ENCODE measurements at regions of chr17 and their contacts with region 1.

Region 1: GRCh38 chr17:13594762-13595598 is 6.7 kb downstream of the HS3ST3A1 start:
- DNase-seq: peak; percentile 33 to 84
- ATAC-seq: peak in 6 of 8 donors; percentile 53 to 80 (median 71)
- H3K4me3 ChIP-seq: no peak overlapping the region
- H3K27ac ChIP-seq: no peak overlapping the region
- H3K4me1 ChIP-seq: peaks cover 0 to 12% (median 0%) of the 10 kb centered on the region in 9 donors
- H3K27me3 ChIP-seq: peaks cover 0 to 30% (median 14%) of the 10 kb centered on the region in 7 donors
- CTCF ChIP-seq: peak; percentile 73 to 91 (median 89)

Region 2: DNA sequence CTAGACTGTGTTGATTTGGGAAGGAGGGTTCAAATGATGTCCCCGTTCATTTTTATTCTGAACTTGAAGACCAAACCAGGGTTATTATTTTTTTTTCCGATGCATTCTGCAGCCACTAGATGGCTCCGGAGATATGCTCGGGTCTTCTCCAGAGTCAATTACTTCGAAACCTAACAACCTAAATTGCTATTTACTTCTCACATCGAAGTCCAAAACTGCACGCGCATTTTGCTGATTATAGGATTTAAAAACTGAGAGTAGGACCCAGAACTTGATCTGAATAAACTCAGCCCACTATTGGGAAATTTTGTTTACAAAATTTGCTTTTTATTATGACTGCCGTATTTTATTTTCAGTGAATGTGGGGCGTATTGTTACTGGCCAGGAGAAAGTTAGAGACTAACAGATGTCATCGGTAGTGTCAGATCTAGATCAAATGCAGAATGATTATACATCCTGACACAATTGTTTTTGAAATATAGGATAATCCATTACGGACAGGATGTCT is 257.1 kb before region 1 on chr17:
- intact Hi-C with region 1: loop called in 8 of 10 experiments (anchors 2 to 10 kb)
- DNase-seq: peak in 1 of 2 donors; percentile 29
- ATAC-seq: peak in 4 of 8 donors; percentile 47 to 67 (median 58)
- H3K4me3 ChIP-seq: peak overlapping the region in 8 of 10 donors; percentile 6 to 49 (median 40)
- H3K27ac ChIP-seq: no peak overlapping the region
- H3K4me1 ChIP-seq: peaks cover 0 to 6% (median 0%) of the 10 kb centered on the region in 9 donors
- H3K27me3 ChIP-seq: peaks cover 0 to 28% (median 0%) of the 10 kb centered on the region in 7 donors
- CTCF ChIP-seq: peak; percentile 47 to 82 (median 70)

Region 3: GRCh38 chr17:13609936-13610335 is 15.0 kb after region 1 on chr17:
- intact Hi-C with region 1: loop called in 1 of 10 experiments (anchors 1 kb)
- DNase-seq: no peak
- ATAC-seq: no peak
- H3K4me3 ChIP-seq: no peak overlapping the region
- H3K27ac ChIP-seq: no peak overlapping the region
- H3K4me1 ChIP-seq: no peaks in the 10 kb centered on the region
- H3K27me3 ChIP-seq: peaks cover 0 to 16% (median 0%) of the 10 kb centered on the region in 7 donors
- CTCF ChIP-seq: no peak

Region 4: GRCh38 chr17:14069251-14070021 is 474.5 kb after region 1 on chr17 and contains the start of gene COX10:
- intact Hi-C with region 1: loop called in 2 of 10 experiments (anchors 10 kb)
- DNase-seq: peak; percentile 88 to 89
- ATAC-seq: peak; percentile 99 to 100 (median 99)
- H3K4me3 ChIP-seq: peak within 1 kb of the TSS; percentile 71 to 98 (median 93)
- H3K27ac ChIP-seq: peak within 1 kb of the TSS; percentile 80 to 95 (median 90)
- H3K4me1 ChIP-seq: peaks cover 0 to 37% (median 25%) of the 10 kb centered on the region in 9 donors
- H3K27me3 ChIP-seq: no peaks in the 10 kb centered on the region
- CTCF ChIP-seq: peak in 1 of 9 donors; percentile 13
- total RNA-seq, gene COX10: 40.5 to 73.1 (median 58.6) TPM

Region 5: DNA sequence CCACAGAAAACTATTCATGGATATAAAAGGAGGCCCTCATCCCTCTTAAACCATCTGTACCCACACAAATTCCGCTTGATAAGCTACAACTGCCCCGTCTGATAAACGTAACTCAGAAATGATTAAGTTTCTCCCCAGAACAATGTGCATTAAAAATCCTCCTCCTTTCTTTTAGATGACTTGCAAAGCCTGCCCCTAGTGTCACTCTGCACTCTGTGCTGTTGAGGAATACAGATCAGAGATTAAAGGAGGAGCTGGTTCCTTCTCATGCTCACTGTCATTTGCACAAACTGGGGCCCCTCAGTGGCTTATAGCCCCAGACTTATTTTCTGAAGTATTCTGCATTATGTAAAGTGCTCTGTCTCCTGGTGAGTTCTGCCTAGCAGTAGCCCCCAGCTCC is 608.4 kb after region 1 on chr17:
- intact Hi-C with region 1: loop called in 1 of 10 experiments (anchors 10 kb)
- DNase-seq: no peak
- ATAC-seq: no peak
- H3K4me3 ChIP-seq: no peak overlapping the region
- H3K27ac ChIP-seq: peak overlapping the region in 1 of 10 donors; percentile 51
- H3K4me1 ChIP-seq: peaks cover 0 to 81% (median 20%) of the 10 kb centered on the region in 9 donors
- H3K27me3 ChIP-seq: no peaks in the 10 kb centered on the region
- CTCF ChIP-seq: peak in 5 of 9 donors; percentile 16 to 43 (median 30)

Region 6: DNA sequence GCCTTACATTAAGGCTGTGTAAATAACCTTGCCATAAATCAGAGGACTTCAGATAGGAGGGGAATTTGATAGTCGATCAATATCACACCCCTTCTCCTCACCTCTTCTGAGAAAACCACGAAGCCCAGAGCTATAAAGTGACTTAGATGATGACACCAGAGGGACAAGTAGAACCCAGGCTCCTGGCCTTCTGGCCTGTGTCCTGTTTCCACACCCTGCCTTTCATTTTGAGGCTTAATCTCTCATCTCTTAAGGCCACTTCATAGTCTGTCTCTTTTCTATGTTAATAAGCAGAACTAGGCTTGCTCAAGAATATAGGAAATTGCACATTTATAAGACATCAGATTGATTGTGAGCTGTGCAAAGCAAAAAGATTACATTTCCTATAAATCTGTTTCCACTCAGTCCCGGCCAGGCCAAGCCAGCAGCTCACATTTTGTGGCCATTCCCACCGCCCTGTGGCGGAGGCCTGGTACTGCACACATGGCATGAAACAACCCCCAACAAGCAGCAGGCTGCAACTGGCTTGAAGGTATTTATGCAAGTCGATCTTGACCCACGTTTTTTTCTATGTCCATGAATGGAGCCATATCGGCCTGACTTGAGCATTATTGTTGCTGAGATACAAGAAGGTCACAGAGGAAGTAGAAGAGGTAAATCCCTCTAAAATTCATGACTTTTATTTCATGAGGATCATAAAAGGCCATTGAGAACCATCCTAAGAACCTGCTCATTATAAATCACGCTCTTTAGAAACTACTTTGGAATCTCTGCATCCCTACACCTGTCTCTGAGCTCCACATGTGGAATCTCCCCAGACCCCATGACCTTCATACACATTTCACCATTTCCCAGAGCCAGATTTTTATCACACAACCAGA is 1576.4 kb after region 1 on chr17:
- intact Hi-C with region 1: loop called in 1 of 10 experiments (anchors 10 kb)
- DNase-seq: peak; percentile 59 to 64
- ATAC-seq: peak; percentile 78 to 93 (median 82)
- H3K4me3 ChIP-seq: no peak overlapping the region
- H3K27ac ChIP-seq: no peak overlapping the region
- H3K4me1 ChIP-seq: peaks cover 0 to 3% (median 0%) of the 10 kb centered on the region in 9 donors
- H3K27me3 ChIP-seq: no peaks in the 10 kb centered on the region
- CTCF ChIP-seq: peak; percentile 60 to 83 (median 79)